ENCODE measurements at regions of chr2 and their contacts with region 1.

Region 1: GRCh38 chr2:39492095-39492590 is 55.1 kb upstream of the MAP4K3 start:
- DNase-seq: peak; percentile 33
- H3K4me3 Mint-ChIP-seq: no peak overlapping the region
- H3K27ac Mint-ChIP-seq: no peak overlapping the region
- H3K4me1 Mint-ChIP-seq: peaks cover 41% of the 10 kb centered on the region
- H3K27me3 Mint-ChIP-seq: peaks cover 7% of the 10 kb centered on the region

Region 2: DNA sequence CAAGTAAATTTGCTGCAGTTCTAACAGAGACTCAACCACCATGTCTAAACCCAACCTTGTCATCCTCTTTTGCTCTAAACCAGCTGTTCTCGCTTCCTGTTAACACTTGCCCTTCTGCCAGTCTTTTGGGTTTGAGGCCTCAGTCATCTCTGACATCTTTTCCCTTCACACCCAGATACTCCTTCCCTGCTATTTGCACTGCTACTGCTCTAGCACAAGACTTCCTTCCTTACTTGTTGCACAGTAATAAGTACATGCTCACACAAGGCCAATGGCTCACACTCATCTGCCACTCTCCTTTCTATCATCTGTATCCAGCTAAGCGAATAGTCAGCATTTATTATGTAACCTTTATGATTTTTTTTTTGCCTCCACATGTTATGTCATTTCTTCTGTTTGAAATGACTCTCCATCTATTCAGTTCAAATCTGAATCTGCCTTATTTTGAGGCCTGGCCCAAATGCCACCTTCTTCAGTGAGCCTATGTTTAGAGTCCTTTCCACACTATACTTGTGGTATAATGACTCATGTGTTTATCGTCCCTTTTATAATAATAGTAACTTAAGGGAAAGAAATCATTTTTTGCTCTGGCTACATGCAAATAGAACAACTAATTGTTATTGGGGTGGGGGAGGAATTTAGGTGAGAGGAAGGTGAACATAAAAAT is 225.9 kb before region 1 on chr2:
- CTCF ChIA-PET with region 1: no interaction called
- POLR2A ChIA-PET with region 1: no interaction called
- intact Hi-C with region 1: loop called (anchors 10 kb)
- DNase-seq: peak; percentile 28
- H3K4me3 Mint-ChIP-seq: no peak overlapping the region
- H3K27ac Mint-ChIP-seq: peak overlapping the region; percentile 21
- H3K4me1 Mint-ChIP-seq: peaks cover 22% of the 10 kb centered on the region
- H3K27me3 Mint-ChIP-seq: no peaks in the 10 kb centered on the region

Region 3: GRCh38 chr2:39408316-39409136 is 83.6 kb before region 1 on chr2:
- CTCF ChIA-PET with region 1: no interaction called
- POLR2A ChIA-PET with region 1: no interaction called
- intact Hi-C with region 1: loop called (anchors 1 kb)
- DNase-seq: no peak
- H3K4me3 Mint-ChIP-seq: no peak overlapping the region
- H3K27ac Mint-ChIP-seq: no peak overlapping the region
- H3K4me1 Mint-ChIP-seq: peaks cover 69% of the 10 kb centered on the region
- H3K27me3 Mint-ChIP-seq: no peaks in the 10 kb centered on the region

Region 4: DNA sequence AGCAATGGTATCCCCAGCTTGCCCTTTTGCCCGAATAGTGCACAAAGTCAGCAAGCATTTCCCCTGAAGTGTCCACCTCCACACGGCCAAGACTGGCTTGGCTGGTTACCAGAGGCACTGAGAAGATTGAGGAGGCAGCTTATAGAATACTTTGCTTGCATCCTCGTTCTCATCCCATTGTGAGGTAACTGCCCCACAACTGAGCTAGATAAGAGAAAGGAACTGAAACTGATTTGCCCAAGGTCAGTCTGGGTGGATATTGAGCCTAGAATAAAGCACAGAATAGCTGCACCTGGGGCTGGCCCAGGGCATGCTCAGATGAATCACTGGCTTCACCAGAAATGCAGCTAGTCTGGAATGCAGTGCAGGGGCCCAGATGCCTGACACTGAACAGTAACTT is 22.3 kb before region 1 on chr2:
- CTCF ChIA-PET with region 1: no interaction called
- POLR2A ChIA-PET with region 1: no interaction called
- intact Hi-C with region 1: loop called (anchors 1 kb)
- DNase-seq: peak; percentile 36
- H3K4me3 Mint-ChIP-seq: no peak overlapping the region
- H3K27ac Mint-ChIP-seq: no peak overlapping the region
- H3K4me1 Mint-ChIP-seq: peaks cover 31% of the 10 kb centered on the region
- H3K27me3 Mint-ChIP-seq: no peaks in the 10 kb centered on the region

Region 5: DNA sequence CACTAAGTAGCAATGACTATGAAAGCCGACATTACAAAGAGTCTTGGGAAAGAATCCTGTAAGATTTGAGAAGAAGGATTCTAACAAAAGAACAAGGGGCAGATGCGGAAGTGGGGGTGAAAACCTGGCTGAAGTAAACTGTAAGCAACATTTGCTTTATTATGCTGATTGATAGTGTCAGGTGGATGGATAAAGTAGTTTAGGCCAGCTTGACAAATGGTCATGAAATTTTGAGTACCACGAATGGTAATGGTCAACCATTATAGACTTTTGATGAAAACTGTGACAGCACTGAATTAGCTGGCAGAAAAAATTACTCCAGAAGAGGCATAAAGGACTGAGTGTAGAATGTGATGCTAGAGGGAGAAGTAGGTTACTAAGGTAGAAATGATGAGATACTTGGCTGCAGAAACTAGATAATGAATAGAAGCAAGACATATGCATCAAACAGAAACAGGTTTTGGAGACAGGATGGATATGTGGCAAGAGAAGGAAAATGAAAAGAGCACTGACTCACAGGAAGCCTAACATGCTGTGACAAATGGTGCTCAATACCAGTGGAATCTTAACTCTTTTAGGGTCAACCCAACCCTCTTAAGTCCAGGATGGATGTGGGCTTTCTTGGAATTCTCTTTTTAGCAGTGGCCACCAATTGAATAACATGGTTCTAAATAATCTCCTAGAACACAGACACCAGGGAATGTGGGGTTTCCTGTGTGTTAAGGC is 280.1 kb after region 1 on chr2:
- CTCF ChIA-PET with region 1: no interaction called
- POLR2A ChIA-PET with region 1: no interaction called
- intact Hi-C with region 1: loop called (anchors 1 kb)
- DNase-seq: no peak
- H3K4me3 Mint-ChIP-seq: no peak overlapping the region
- H3K27ac Mint-ChIP-seq: no peak overlapping the region
- H3K4me1 Mint-ChIP-seq: peaks cover 45% of the 10 kb centered on the region
- H3K27me3 Mint-ChIP-seq: no peaks in the 10 kb centered on the region

Region 6: GRCh38 chr2:40168041-40168442 is 675.9 kb after region 1 on chr2:
- CTCF ChIA-PET with region 1: no interaction called
- POLR2A ChIA-PET with region 1: no interaction called
- intact Hi-C with region 1: no loop called
- DNase-seq: no peak
- H3K4me3 Mint-ChIP-seq: no peak overlapping the region
- H3K27ac Mint-ChIP-seq: no peak overlapping the region
- H3K4me1 Mint-ChIP-seq: no peaks in the 10 kb centered on the region
- H3K27me3 Mint-ChIP-seq: no peaks in the 10 kb centered on the region

Measured in activated CD4-positive, alpha-beta memory T cell treated with anti-CD3 and anti-CD28 coated beads for 36 hours (primary cell).